ENCODE measurements at regions of chr9 and their contacts with region 1.

Region 1: DNA sequence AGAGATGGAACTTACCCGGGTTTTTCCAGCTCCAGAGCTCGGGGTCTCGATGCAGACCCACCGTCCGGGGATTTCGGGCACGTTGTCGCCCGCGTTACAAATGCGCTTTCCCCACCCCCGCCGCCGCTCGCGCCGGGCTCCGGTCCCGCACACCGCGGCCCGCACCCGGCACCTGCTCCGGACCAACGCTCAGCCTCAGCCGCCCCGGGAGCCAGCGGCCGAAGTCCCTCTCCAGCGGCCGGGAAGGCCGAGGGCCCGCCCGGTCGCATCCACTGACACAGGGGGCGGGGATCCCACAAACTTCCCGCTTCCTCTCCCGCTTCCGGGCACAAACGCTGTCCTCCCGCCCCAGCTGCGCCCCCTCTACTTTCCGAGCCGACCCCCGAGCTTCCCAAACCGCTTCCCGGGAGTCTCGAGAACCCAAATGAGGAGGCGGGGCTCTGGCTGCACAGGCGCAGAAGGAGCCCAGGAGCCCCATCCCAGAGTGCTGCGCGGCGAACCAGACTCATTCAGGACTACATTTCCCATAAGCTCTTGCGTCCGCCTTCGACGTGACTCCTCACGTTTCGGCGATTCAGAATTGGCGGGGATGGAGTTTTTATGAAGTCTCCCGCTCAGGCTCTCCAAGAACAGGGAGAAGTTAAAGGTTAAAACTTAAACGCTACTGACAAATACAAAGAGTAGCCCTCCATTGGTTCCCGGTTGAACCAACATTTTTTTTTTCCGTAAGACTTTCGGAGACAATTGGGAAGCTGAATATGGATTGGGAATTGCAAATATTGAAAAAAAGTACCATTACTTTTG is at the start of gene ZNF782:
- DNase-seq: peak; percentile 88 to 95 (median 93)
- H3K4me3 ChIP-seq: peak within 1 kb of the TSS; percentile 62 to 98 (median 83)
- H3K27ac ChIP-seq: peak within 1 kb of the TSS in 49 of 59 donors; percentile 34 to 88 (median 75)
- H3K27me3 ChIP-seq: no peaks in the 10 kb centered on the region
- CTCF ChIP-seq: peak in 40 of 56 donors; percentile 4 to 68 (median 38)
- total RNA-seq, gene ZNF782: 10.1 to 22.8 (median 15.5) TPM

Region 2: DNA sequence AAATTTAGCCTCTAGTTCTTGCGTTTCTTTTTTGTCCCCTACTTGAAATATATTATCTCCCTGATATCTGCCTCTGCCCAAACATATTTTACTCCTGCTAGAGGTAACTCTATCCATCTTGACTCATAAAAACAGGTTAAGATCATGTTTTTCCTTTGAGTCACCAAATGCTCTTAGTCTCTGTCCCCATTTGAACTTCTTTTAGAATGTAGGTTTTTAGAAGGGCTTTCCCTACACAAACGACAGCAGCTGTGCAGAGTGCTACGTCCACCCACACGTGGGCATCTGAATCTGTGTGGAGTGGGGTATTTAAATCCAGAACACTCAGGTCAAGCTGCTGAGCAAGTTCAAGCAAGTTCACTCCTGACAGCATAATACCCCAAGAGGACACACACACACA is 554.5 kb before region 1 on chr9:
- intact Hi-C with region 1: no loop called
- DNase-seq: no peak
- H3K4me3 ChIP-seq: no peak overlapping the region
- H3K27ac ChIP-seq: no peak overlapping the region
- H3K27me3 ChIP-seq: no peaks in the 10 kb centered on the region
- CTCF ChIP-seq: no peak

Region 3: DNA sequence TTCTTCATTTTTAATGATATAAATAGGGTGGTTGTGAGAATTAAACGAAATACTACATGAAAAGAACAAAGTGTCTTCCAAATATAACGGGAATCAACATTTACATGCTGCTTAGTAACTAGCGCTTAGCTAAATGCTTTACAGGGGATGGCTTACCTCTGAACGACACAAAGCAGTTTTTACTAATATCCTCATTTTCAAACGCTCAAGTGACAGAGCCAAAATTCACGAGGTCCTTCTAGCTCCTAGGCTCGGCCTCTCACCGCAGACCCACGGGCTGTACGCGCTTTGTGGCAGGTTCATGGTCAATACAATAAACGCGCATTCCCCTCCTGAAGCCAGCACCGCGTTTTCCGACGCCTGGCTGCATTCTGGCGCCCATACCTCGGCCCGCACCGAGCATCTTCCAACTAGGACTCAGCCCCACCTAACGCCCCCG is 76.8 kb before region 1 on chr9:
- intact Hi-C with region 1: loop called in 1 of 2 experiments (anchors 5 kb)
- DNase-seq: peak in 1 of 10 donors; percentile 38
- H3K4me3 ChIP-seq: peak overlapping the region; percentile 68 to 100 (median 92)
- H3K27ac ChIP-seq: peak overlapping the region in 57 of 59 donors; percentile 6 to 93 (median 87)
- H3K27me3 ChIP-seq: no peaks in the 10 kb centered on the region
- CTCF ChIP-seq: no peak

Region 4: DNA sequence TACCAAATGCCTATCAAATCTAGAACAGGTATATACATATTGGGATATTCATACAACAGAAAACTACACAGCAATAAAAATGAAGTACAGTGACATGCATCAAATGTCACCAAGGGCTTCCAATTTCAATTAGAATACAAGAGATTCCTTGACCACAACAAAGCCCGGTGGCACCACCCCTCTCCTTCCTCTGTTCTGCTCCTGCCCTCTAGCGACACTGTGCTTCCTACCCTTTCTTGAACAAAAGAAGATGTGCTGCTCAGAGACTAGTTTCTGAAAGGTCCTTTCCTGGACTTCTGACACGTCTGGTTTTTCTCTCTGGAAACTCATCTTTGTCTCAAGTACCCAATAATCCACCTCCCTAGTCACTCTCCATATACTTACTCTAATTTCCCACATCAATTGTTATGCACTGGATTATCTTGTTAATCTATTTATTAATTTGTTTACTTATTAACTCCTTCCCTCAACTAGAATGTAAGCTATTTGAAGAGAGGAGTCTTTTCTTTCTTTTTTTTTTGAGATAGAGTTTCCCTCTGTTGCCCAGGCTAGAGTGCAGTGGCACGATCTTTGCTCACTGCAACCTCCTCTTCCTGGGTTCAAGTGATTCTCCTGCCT is 255.0 kb after region 1 on chr9:
- intact Hi-C with region 1: loop called (anchors 2 kb)
- DNase-seq: peak in 4 of 10 donors; percentile 21 to 72 (median 55)
- H3K4me3 ChIP-seq: no peak overlapping the region
- H3K27ac ChIP-seq: no peak overlapping the region
- H3K27me3 ChIP-seq: no peaks in the 10 kb centered on the region
- CTCF ChIP-seq: peak in 54 of 56 donors; percentile 10 to 84 (median 55)

Region 5: GRCh38 chr9:97220894-97221477 is 366.7 kb after region 1 on chr9:
- intact Hi-C with region 1: loop called in 1 of 2 experiments (anchors 10 kb)
- DNase-seq: peak in 5 of 10 donors; percentile 5 to 41 (median 11)
- H3K4me3 ChIP-seq: peak overlapping the region; percentile 41 to 73 (median 59)
- H3K27ac ChIP-seq: peak overlapping the region in 19 of 59 donors; percentile 29 to 78 (median 67)
- H3K27me3 ChIP-seq: peaks cover 0 to 23% (median 0%) of the 10 kb centered on the region in 45 donors
- CTCF ChIP-seq: no peak

Region 6: GRCh38 chr9:97386733-97387503 is 532.6 kb after region 1 on chr9:
- intact Hi-C with region 1: loop called (anchors 5 to 10 kb)
- DNase-seq: peak; percentile 66 to 86 (median 79)
- H3K4me3 ChIP-seq: peak overlapping the region; percentile 11 to 65 (median 47)
- H3K27ac ChIP-seq: no peak overlapping the region
- H3K27me3 ChIP-seq: peaks cover 0 to 4% (median 0%) of the 10 kb centered on the region in 45 donors
- CTCF ChIP-seq: peak; percentile 78 to 98 (median 94)

Region 7: DNA sequence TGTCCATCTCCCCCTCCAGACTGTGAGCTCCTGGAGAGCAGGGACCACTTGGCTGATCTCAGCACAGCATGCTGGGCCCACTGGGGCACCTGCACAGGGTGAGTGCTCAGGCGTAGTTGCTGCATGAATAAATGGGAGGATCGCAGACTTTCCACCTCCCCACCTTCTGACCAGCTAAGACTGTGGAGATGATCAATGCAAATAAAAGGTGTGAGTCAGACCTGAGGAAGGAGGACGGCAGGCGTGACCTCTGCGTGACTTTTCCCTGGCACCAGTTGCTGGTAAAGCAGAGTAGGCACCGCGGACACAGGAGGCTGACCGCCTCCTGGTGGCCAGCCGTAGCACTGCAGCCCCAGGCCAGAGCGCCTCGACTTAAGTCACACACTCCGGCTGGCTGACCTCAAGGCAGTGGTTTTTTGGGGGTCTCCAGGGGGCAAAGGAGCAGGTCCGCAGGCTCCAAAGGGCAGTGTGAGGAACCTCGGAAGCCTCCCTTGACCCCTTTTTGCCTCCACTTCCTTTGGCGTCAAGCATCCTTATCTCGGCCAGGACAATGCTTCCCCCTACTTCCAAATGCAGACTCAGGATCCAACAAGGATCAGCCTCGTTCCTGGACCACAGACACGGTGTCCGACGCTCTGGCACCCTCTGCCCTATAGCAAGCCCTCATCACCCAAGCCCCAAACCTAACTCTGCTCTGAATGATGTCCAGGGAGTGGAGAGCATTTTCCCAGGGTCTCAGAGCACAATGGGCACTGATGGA is 544.9 kb after region 1 on chr9:
- intact Hi-C with region 1: loop called in 1 of 2 experiments (anchors 5 kb)
- DNase-seq: peak in 6 of 10 donors; percentile 45 to 64 (median 52)
- H3K4me3 ChIP-seq: no peak overlapping the region
- H3K27ac ChIP-seq: no peak overlapping the region
- H3K27me3 ChIP-seq: no peaks in the 10 kb centered on the region
- CTCF ChIP-seq: peak; percentile 40 to 94 (median 82)